Activated T-helper 2 cell treated with anti-CD3 and anti-CD28 coated beads, Interferon-gamma antibody, Interleukin-2, Interleukin-4, amounts not matched to agents 10 μg/mL and 5 μg/mL and 100 μg/mL, durations not matched to agents 14 hours and 24 hours and 36 hours (primary cell): ENCODE measurements at regions of chr2 and their contacts with region 1.

Region 1: DNA sequence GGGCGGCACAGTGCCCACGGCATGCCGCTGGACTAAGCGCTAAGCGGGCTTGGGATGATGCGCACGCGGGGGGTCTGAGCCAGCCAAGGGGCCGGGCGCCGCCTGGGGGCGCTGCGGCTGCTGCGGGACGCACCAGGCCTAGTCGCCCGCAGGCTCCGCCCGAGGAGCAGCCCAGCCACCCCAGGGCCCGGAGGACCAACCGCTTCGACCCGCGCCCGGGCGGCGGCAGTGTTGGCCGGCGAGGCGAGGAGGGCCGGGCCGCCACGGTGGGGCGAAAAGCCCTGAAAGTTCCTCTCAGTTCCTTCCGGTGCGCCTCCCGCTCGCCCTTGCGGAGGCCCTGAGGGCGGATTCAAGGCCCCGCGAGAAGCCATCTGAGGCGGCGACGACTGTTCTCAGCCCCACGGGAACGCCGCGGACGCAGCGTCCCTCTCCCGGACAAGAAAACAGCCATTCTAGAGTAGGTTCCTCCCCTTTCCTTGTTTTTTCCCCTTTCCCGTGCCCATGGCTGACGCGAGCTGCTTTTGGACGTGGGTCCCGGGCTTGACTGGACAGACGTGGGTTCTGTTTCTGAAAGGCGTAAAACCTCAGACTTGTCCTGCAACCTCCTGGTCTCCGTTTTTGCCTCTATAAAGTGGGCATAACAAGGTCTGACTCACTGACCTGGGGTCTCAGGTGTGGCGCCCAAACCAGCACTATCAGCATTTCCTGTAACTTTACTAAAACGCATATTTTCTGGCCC is at the start of gene ANKAR:
- DNase-seq: peak; percentile 73
- H3K4me3 Mint-ChIP-seq: peak within 1 kb of the TSS; percentile 88
- H3K27ac Mint-ChIP-seq: peak within 1 kb of the TSS; percentile 95
- H3K4me1 Mint-ChIP-seq: peaks cover 22% of the 10 kb centered on the region
- H3K27me3 Mint-ChIP-seq: no peaks in the 10 kb centered on the region
- total RNA-seq, gene ANKAR: 4.0 and 4.1 TPM in 2 replicates

Region 2: GRCh38 chr2:187851955-187852561 is 1822.5 kb before region 1 on chr2:
- intact Hi-C with region 1: no loop called
- DNase-seq: no peak
- H3K4me3 Mint-ChIP-seq: no peak overlapping the region
- H3K27ac Mint-ChIP-seq: no peak overlapping the region
- H3K4me1 Mint-ChIP-seq: no peaks in the 10 kb centered on the region
- H3K27me3 Mint-ChIP-seq: no peaks in the 10 kb centered on the region

Region 3: DNA sequence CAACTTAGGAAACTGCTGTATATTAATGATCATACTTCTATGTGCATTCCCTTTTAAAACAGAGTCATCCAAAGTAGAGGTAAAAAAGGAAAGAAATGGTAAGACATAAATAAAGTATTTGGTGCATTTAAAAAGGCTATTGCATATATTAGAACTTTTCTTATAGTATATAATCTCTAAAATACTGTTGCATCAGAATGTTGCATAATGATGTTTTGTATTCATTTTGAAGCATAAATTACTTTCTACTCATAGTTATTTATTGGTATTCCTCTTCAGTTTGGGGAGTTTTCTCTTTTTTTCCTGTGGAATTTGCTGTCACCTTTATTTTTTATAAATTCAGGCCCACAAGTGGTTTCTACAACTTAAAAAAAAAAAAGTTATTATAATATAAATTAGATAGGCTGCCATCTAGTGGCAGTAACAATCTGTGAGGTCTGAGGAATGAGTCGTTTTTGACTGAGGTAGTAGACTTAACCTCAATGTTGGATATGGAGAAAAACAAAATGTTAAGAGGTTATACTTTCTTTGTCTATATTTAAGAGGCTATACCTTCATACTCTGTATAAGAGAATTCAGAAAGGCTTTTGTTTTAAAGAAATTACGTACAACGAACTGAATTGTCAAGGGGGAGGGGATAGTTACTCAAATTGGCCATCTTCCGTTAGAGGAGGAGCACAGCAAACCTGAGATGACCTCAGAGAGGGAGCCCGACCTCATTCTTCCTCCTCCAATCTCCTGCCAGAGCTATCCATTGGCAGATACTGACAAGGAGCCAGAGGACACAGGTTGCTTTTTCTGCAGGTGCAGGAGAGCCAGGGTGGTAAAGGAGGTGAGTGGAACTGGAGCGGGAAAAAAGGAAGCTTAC is 23.7 kb after region 1 on chr2:
- intact Hi-C with region 1: loop called (anchors 1 kb)
- DNase-seq: no peak
- H3K4me3 Mint-ChIP-seq: no peak overlapping the region
- H3K27ac Mint-ChIP-seq: no peak overlapping the region
- H3K4me1 Mint-ChIP-seq: peaks cover 3% of the 10 kb centered on the region
- H3K27me3 Mint-ChIP-seq: no peaks in the 10 kb centered on the region

Region 4: GRCh38 chr2:189762551-189763298 is 88.2 kb after region 1 on chr2 and contains the start of gene OSGEPL1:
- intact Hi-C with region 1: loop called (anchors 1 kb)
- DNase-seq: peak; percentile 90
- H3K4me3 Mint-ChIP-seq: peak within 1 kb of the TSS; percentile 92
- H3K27ac Mint-ChIP-seq: peak within 1 kb of the TSS; percentile 97
- H3K4me1 Mint-ChIP-seq: peaks cover 12% of the 10 kb centered on the region
- H3K27me3 Mint-ChIP-seq: no peaks in the 10 kb centered on the region
- total RNA-seq, gene OSGEPL1: 9.7 and 11.6 TPM in 2 replicates